Gastrocnemius medialis (tissue), 4 donors: ENCODE measurements at regions of chr9 and their contacts with region 1.

Region 1: GRCh38 chr9:32571969-32572899 is 725 bp downstream of the NDUFB6 start:
- DNase-seq: peak; percentile 23 to 48
- ATAC-seq: peak; percentile 79 to 82
- H3K4me3 ChIP-seq: peak overlapping the region; percentile 75 to 96 (median 86)
- H3K27ac ChIP-seq: peak overlapping the region; percentile 86 to 95 (median 87)
- H3K4me1 ChIP-seq: peaks cover 13 to 16% of the 10 kb centered on the region in 2 donors
- H3K27me3 ChIP-seq: no peaks in the 10 kb centered on the region
- CTCF ChIP-seq: peak; percentile 33 to 60 (median 53)
- POLR2A ChIP-seq: no peak

Region 2: GRCh38 chr9:32384364-32385151 is 187.7 kb before region 1 on chr9 and contains the start of gene ACO1:
- in situ Hi-C with region 1: loop called in 3 of 4 experiments (anchors 5 kb)
- intact Hi-C with region 1: loop called (anchors 1 kb)
- DNase-seq: peak; percentile 80 to 86
- ATAC-seq: peak; percentile 89 to 93
- H3K4me3 ChIP-seq: peak within 1 kb of the TSS; percentile 67 to 94 (median 80)
- H3K27ac ChIP-seq: peak within 1 kb of the TSS; percentile 88 to 96 (median 90)
- H3K4me1 ChIP-seq: peaks cover 20 to 24% of the 10 kb centered on the region in 2 donors
- H3K27me3 ChIP-seq: no peaks in the 10 kb centered on the region
- CTCF ChIP-seq: peak in 1 of 5 experiments; percentile 12
- POLR2A ChIP-seq: peak; percentile 81 to 86
- total RNA-seq, gene ACO1: 28.3 to 35.0 (median 30.3) TPM

Region 3: GRCh38 chr9:32526041-32526706 is 46.1 kb before region 1 on chr9 and contains the start of gene RIGI:
- in situ Hi-C with region 1: no loop called
- intact Hi-C with region 1: loop called (anchors 2 kb)
- DNase-seq: peak; percentile 75 to 83
- ATAC-seq: peak; percentile 92 to 94
- H3K4me3 ChIP-seq: peak within 1 kb of the TSS; percentile 70 to 79 (median 74)
- H3K27ac ChIP-seq: peak within 1 kb of the TSS; percentile 79 to 84 (median 82)
- H3K4me1 ChIP-seq: peaks cover 31% of the 10 kb centered on the region in 2 donors
- H3K27me3 ChIP-seq: no peaks in the 10 kb centered on the region
- CTCF ChIP-seq: peak; percentile 17 to 58 (median 43)
- POLR2A ChIP-seq: peak; percentile 34 to 71
- total RNA-seq, gene RIGI: 1.6 to 3.3 (median 2.8) TPM

Region 4: GRCh38 chr9:32550562-32551433 is 21.4 kb before region 1 on chr9:
- in situ Hi-C with region 1: no loop called
- intact Hi-C with region 1: loop called (anchors 1 kb)
- DNase-seq: peak; percentile 83 to 84
- ATAC-seq: peak; percentile 68 to 83
- H3K4me3 ChIP-seq: peak overlapping the region; percentile 65 to 94 (median 84)
- H3K27ac ChIP-seq: peak overlapping the region; percentile 87 to 94 (median 91)
- H3K4me1 ChIP-seq: peaks cover 20 to 21% of the 10 kb centered on the region in 2 donors
- H3K27me3 ChIP-seq: no peaks in the 10 kb centered on the region
- CTCF ChIP-seq: no peak
- POLR2A ChIP-seq: peak; percentile 64 to 77

Region 5: DNA sequence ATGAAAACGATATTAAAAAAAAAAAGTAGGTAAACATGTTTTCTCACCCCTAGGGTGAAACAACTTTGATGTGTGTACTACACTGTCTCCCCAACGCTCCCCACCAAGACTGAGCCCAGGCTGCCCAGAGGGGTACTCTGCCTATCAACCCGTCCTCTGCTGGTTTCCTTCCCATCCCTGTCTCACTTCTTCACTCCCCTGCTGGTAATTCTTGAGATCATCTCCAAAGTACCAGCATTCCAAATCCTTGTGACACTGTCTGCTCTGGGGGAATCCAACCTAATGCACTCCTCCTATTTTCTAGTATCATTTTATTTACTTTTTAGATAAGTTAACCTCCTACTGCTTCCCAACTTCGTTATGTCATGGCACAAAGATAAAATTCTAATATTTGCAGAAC is 435.5 kb after region 1 on chr9:
- in situ Hi-C with region 1: loop called in 1 of 4 experiments (anchors 5 kb)
- intact Hi-C with region 1: no loop called
- DNase-seq: no peak
- ATAC-seq: no peak
- H3K4me3 ChIP-seq: no peak overlapping the region
- H3K27ac ChIP-seq: no peak overlapping the region
- H3K4me1 ChIP-seq: no peaks in the 10 kb centered on the region
- H3K27me3 ChIP-seq: no peaks in the 10 kb centered on the region
- CTCF ChIP-seq: no peak
- POLR2A ChIP-seq: no peak